Ovary (tissue), 10 donors: ENCODE measurements at regions of chr17 and their contacts with region 1.

Region 1: GRCh38 chr17:13594762-13595598 is 6.7 kb downstream of the HS3ST3A1 start:
- DNase-seq: peak; percentile 54 to 78 (median 69)
- H3K4me3 ChIP-seq: no peak overlapping the region
- H3K27ac ChIP-seq: no peak overlapping the region
- H3K4me1 ChIP-seq: peaks cover 2% of the 10 kb centered on the region
- H3K27me3 ChIP-seq: no peaks in the 10 kb centered on the region
- CTCF ChIP-seq: peak in 2 of 3 donors; percentile 58 to 73
- EP300 ChIP-seq: no peak
- POLR2A ChIP-seq: no peak

Region 2: GRCh38 chr17:13346996-13347765 is 247.8 kb before region 1 on chr17:
- intact Hi-C with region 1: loop called in 1 of 4 experiments (anchors 10 kb)
- DNase-seq: no peak
- H3K4me3 ChIP-seq: no peak overlapping the region
- H3K27ac ChIP-seq: no peak overlapping the region
- H3K4me1 ChIP-seq: no peaks in the 10 kb centered on the region
- H3K27me3 ChIP-seq: no peaks in the 10 kb centered on the region
- CTCF ChIP-seq: no peak
- EP300 ChIP-seq: no peak
- POLR2A ChIP-seq: no peak

Region 3: GRCh38 chr17:13806092-13806491 is 211.1 kb after region 1 on chr17:
- intact Hi-C with region 1: loop called in 1 of 4 experiments (anchors 10 kb)
- DNase-seq: no peak
- H3K4me3 ChIP-seq: no peak overlapping the region
- H3K27ac ChIP-seq: no peak overlapping the region
- H3K4me1 ChIP-seq: no peaks in the 10 kb centered on the region
- H3K27me3 ChIP-seq: no peaks in the 10 kb centered on the region
- CTCF ChIP-seq: no peak
- EP300 ChIP-seq: no peak
- POLR2A ChIP-seq: no peak